Dorsolateral prefrontal cortex (tissue), 120 donors: ENCODE measurements at regions of chr11 and their contacts with region 1.

Region 1: GRCh38 chr11:57644748-57645688 is 4.7 kb downstream of the YPEL4 start:
- DNase-seq: peak; percentile 67 to 91 (median 84)
- H3K4me3 ChIP-seq: peak overlapping the region in 9 of 59 donors; percentile 7 to 31 (median 13)
- H3K27ac ChIP-seq: peak overlapping the region in 38 of 59 donors; percentile 1 to 95 (median 50)
- H3K27me3 ChIP-seq: peaks cover 0 to 6% (median 0%) of the 10 kb centered on the region in 45 donors
- CTCF ChIP-seq: peak; percentile 65 to 94 (median 84)

Region 2: DNA sequence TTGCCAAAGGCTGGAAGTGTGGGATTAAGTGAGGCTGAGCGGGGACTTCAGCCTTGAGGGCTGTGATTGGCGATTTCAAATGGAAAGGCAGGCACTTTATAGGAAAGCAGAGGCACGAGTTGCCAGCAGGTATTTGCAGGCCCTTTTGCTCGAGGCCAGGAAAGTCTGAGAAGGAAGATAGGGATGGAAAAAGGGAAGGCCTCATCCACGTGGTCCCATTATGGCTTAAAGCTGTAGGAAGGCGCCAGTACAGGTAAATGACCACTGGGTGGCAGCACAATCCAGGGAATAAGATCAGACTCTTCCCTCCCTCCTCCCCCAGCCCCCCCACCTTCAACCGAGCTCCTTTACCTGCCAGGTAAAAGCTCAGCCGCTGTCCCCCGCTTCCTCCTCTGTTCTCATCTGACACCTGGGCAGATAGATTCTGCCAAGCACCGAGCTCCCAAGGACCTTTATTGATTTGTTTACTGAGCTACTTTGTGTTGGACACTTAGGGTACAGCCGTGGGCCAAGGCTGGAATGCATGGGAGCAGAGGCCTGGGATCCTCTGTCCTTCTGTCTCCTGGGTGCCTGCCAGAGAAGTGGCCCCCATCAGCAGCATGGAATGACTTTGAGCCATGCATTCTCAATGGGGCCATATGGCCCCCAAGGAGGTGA is 299.3 kb before region 1 on chr11:
- intact Hi-C with region 1: loop called (anchors 5 kb)
- DNase-seq: peak in 9 of 10 donors; percentile 49 to 80 (median 74)
- H3K4me3 ChIP-seq: no peak overlapping the region
- H3K27ac ChIP-seq: peak overlapping the region in 1 of 59 donors; percentile 22
- H3K27me3 ChIP-seq: no peaks in the 10 kb centered on the region
- CTCF ChIP-seq: peak; percentile 52 to 93 (median 86)

Region 3: DNA sequence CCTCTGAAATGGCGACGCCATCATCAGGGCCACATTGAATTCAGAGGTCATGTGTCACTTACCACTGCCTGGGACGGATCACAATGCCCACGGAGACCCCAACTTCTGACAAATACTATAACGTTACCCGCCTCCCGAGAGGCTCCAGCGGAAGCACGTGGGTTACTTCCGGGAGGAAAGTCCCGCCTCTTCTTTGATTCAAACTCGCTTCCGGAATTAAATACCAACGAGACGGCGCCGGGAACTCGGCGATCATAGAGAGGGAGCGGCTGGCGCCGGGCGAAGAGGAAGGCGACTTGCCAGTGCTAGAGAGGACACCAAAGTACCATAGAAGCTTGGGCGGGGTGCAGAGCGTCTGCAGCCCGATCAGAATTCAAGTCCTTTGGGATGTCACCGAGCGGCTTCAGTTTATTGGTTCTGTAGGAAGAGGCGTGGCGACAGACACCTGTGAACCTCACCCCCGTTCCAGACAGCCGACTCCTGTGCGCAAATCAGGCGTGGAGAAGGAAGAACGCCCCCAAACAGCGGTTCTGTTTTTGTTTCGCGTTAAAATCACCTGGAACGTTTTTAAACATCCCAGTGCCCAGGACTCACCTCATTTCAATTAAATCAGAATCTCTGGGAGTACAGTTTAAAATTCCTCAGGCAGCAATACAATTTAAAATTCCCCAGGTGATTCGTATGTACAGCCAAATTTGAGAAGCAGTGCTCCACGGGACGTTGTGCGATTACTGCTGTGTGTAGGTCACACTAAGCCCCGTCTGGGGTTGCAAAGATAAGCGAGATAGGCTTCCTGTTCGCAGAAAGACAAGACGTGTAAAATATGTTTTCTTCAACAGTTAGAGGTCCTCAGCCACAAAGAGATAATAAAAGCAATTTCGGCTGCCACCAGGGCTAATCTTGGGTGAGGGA is 114.2 kb before region 1 on chr11 and contains the start of gene TIMM10:
- intact Hi-C with region 1: loop called in 1 of 2 experiments (anchors 2 kb)
- DNase-seq: peak; percentile 90 to 98 (median 96)
- H3K4me3 ChIP-seq: peak within 1 kb of the TSS; percentile 65 to 99 (median 89)
- H3K27ac ChIP-seq: peak within 1 kb of the TSS in 48 of 59 donors; percentile 4 to 84 (median 63)
- H3K27me3 ChIP-seq: no peaks in the 10 kb centered on the region
- CTCF ChIP-seq: peak in 50 of 56 donors; percentile 19 to 73 (median 46)
- total RNA-seq, gene TIMM10: 26.5 to 76.2 (median 48.8) TPM

Region 4: DNA sequence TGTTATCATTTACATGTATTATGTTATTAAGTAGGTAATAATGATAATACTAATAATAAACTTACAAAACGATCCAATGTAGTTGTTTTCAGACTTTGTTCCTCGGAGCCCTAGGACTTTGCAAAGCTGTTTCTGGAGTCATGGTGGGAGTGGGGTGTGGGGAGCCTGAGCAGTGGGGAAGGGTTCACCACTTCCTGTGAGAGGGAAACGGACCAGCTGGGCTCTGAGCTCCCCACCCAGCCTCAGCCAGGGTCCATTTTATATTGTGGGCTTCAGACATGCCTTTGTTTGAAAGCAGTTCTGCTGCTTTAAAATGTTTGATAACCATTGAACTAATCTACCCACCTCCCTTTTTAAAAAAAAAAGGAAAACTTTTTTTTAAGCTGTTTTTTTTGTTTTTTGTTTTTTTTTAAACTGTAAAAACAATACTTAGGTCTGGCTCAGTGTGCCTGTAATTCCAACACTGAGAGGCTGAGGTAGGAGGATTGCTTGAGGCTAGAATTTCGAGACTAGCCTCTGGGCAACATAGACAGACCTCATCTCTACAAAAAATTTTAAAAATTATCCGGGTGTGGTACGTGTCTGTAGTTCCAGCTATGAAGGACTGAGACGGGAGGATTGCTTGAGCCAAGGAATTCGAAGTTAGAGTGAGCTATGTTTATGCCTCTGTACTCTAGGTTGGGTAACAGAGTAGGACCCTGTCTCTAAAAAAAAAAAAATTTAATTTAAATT is 40.6 kb before region 1 on chr11:
- intact Hi-C with region 1: no loop called
- DNase-seq: no peak
- H3K4me3 ChIP-seq: no peak overlapping the region
- H3K27ac ChIP-seq: no peak overlapping the region
- H3K27me3 ChIP-seq: no peaks in the 10 kb centered on the region
- CTCF ChIP-seq: no peak

Region 5: DNA sequence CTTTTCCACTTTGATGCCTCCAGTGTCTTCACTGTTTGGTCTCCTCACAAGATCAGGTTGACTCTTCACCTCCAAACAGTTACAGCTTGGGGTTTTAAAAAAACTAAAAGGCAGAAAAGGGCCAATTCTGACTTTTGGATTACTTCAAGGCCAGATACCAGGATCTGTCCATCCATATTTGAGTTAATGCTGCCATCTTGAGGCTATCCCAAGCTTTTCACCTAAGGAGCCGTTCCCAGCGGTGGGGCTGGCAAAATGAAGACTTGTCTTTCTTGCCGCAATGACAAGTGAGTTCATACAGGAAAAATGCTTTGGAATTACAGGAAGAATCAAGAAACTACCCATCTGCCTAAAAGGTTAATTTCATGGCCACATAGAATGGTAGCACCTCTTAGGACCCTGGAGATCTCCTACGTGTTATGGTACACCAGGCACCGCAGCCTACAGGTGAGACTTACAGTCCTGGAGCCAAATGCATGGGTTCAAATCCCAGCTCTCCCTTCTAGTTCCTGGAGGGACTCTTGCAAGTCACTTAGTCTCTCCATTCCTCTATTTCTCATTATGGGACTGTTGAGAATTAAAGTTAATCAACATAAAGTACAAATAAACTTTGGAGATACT is 868.8 kb after region 1 on chr11:
- intact Hi-C with region 1: loop called in 1 of 2 experiments (anchors 2 kb)
- DNase-seq: peak in 5 of 10 donors; percentile 32 to 55 (median 42)
- H3K4me3 ChIP-seq: peak overlapping the region in 1 of 59 donors; percentile 21
- H3K27ac ChIP-seq: peak overlapping the region in 2 of 59 donors; percentile 38 to 40
- H3K27me3 ChIP-seq: no peaks in the 10 kb centered on the region
- CTCF ChIP-seq: peak; percentile 50 to 83 (median 70)